Activated CD4-positive, alpha-beta T cell treated with anti-CD3 and anti-CD28 coated beads for 36 hours (primary cell): ENCODE measurements at regions of chr10 and their contacts with region 1.

Region 1: DNA sequence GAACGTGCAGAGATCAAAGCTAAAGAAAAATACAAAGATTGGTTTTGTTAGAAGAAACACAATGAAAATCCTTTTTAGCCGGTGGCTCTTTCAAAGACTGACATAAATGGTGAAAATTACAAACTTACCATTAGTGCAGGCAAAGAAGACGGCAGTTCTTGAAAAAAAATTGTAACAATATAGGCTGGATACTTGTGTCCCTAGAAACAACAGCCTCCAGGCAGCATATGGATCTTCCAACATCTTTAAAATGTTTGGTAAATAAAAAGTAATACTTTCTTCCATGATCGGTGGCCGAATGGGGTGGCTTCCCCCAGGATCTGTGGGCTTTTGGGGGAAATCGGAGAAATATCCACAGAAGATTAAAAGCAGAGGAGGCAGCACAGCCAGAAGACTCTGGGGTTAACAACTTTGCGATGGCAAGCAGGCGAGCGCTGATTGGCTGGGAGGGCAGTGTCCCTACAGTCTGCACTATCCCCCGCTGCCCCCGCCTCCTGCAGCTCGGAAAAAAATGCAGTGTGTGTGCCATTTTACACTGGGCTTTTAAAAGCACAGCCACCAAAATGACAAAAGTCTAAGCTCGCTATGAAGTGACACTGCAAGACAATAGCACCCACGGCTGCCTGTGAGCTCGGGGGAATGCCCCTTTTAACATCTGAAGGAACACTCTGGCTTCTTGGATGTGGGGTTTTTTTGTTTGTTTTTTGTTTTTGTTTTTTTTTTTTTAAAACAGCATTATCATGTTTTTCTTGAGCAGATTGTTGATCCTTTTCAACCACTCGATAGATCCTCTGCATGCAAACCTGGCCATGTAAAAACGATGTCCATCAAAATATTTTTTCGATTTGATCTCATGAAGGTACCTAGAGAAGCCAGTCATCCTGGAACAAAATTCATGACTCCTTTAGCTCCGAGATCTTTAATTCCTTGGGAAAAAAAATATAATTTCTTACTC is 31.7 kb upstream of the EPC1 start:
- DNase-seq: peak; percentile 97
- ATAC-seq: peak; percentile 95
- H3K4me3 Mint-ChIP-seq: no peak overlapping the region
- H3K27ac Mint-ChIP-seq: no peak overlapping the region
- H3K4me1 Mint-ChIP-seq: peaks cover 18% of the 10 kb centered on the region
- H3K27me3 Mint-ChIP-seq: no peaks in the 10 kb centered on the region

Region 2: GRCh38 chr10:30701451-30702173 is 1677.0 kb before region 1 on chr10:
- CTCF ChIA-PET with region 1: no interaction called
- POLR2A ChIA-PET with region 1: no interaction called
- intact Hi-C with region 1: loop called in 1 of 2 experiments (anchors 5 kb)
- DNase-seq: peak; percentile 93
- ATAC-seq: peak; percentile 73
- H3K4me3 Mint-ChIP-seq: peak overlapping the region; percentile 86
- H3K27ac Mint-ChIP-seq: peak overlapping the region; percentile 90
- H3K4me1 Mint-ChIP-seq: peaks cover 87% of the 10 kb centered on the region
- H3K27me3 Mint-ChIP-seq: no peaks in the 10 kb centered on the region

Region 3: GRCh38 chr10:31864834-31865518 is 513.7 kb before region 1 on chr10:
- CTCF ChIA-PET with region 1: no interaction called
- POLR2A ChIA-PET with region 1: no interaction called
- intact Hi-C with region 1: loop called in 1 of 2 experiments (anchors 10 kb)
- DNase-seq: no peak
- ATAC-seq: no peak
- H3K4me3 Mint-ChIP-seq: no peak overlapping the region
- H3K27ac Mint-ChIP-seq: peak overlapping the region; percentile 3
- H3K4me1 Mint-ChIP-seq: peaks cover 30% of the 10 kb centered on the region
- H3K27me3 Mint-ChIP-seq: no peaks in the 10 kb centered on the region

Region 4: GRCh38 chr10:32055813-32056600 is 322.6 kb before region 1 on chr10 and contains the start of gene KIF5B:
- CTCF ChIA-PET with region 1: no interaction called
- POLR2A ChIA-PET with region 1: no interaction called
- intact Hi-C with region 1: loop called (anchors 2 to 10 kb)
- DNase-seq: peak; percentile 92
- ATAC-seq: peak; percentile 92
- H3K4me3 Mint-ChIP-seq: peak within 1 kb of the TSS; percentile 97
- H3K27ac Mint-ChIP-seq: peak within 1 kb of the TSS; percentile 96
- H3K4me1 Mint-ChIP-seq: peaks cover 37% of the 10 kb centered on the region
- H3K27me3 Mint-ChIP-seq: no peaks in the 10 kb centered on the region
- total RNA-seq, gene KIF5B: 57.4 to 59.9 TPM

Region 5: DNA sequence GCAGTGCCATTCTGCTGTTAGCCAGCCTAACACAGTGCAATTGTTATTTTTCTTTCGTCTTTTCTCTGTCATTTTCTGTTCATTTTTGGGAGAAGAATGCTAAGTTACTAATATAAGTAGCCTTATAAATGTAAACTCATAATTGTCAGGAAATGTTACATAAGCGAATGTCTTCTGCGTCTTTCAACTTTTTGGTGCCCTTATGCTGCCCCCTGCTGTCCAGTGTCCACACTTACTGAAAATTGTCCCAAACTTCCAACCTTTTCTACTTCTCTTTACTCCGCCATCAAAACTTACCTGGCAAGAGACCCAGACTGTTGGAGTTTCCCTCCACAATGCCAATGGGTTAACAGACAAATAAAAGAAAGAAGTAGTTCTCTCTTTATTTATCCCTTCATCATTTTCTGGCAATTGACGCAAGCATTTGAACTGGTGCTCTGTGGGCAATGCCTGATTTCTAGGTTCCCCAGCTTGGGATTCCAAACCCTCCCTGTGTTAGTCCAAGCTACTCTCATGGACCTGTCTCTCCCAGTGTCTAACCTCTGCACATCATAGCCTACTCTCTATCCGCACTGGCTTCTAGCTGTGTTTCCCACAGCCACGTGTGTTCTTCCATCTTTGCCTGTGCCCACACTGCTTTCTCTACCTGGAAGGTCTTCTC is 10.7 kb before region 1 on chr10:
- CTCF ChIA-PET with region 1: interaction called, 12 read pairs
- POLR2A ChIA-PET with region 1: no interaction called
- intact Hi-C with region 1: no loop called
- DNase-seq: peak; percentile 86
- ATAC-seq: peak; percentile 20
- H3K4me3 Mint-ChIP-seq: peak overlapping the region; percentile 0
- H3K27ac Mint-ChIP-seq: peak overlapping the region; percentile 5
- H3K4me1 Mint-ChIP-seq: peaks cover 62% of the 10 kb centered on the region
- H3K27me3 Mint-ChIP-seq: no peaks in the 10 kb centered on the region

Region 6: DNA sequence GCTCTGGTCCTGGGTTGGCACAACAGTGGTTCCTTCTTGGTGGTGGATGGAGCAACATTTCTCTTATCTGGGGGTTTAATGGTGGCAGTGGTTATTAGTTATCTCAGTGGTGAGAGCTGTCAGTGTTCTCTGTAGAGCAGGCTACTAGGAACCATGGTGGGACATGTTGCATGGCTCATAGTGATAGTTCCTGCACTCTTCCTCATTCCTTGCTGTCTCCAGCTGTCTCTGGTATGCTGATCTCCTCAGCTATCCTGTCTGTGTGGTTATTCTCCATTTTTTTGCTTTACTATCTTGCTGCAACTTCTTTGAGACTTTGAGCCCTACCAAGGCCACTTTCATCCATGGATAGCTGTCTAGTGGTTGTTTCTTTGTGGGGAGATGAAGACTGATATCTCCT is 111.3 kb after region 1 on chr10:
- CTCF ChIA-PET with region 1: no interaction called
- POLR2A ChIA-PET with region 1: no interaction called
- intact Hi-C with region 1: no loop called
- DNase-seq: no peak
- ATAC-seq: no peak
- H3K4me3 Mint-ChIP-seq: no peak overlapping the region
- H3K27ac Mint-ChIP-seq: no peak overlapping the region
- H3K4me1 Mint-ChIP-seq: peaks cover 4% of the 10 kb centered on the region
- H3K27me3 Mint-ChIP-seq: no peaks in the 10 kb centered on the region

Region 7: DNA sequence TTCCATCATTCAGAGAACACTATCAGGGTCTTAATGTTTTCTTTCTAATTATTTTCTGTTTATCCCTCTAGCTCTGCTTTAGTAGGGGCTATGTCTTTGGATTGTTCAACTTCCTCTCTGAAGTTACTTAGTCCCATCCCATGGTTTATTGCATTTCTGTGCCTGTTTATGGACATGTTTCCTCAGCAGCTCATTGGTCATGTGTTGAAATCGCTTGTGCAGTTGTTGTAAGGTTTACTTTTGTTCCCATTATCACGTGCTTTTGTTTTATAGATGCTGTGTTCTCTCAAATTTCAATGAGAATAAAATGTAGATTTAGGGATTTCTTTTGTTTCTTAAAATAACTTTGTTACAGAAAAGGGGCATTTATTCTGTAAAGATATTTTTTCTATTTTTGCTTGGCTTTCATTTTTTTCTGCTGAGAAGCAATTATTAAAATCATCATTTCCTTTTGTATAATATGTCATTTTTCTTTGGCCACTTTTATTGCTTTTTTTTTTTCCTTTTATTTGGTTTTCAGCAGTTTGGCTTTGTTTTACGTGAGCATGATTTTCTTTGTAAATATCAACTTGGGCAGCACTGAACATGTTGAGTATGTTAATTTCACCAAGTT is 178.2 kb after region 1 on chr10:
- CTCF ChIA-PET with region 1: no interaction called
- POLR2A ChIA-PET with region 1: no interaction called
- intact Hi-C with region 1: no loop called
- DNase-seq: no peak
- ATAC-seq: no peak
- H3K4me3 Mint-ChIP-seq: no peak overlapping the region
- H3K27ac Mint-ChIP-seq: no peak overlapping the region
- H3K4me1 Mint-ChIP-seq: no peaks in the 10 kb centered on the region
- H3K27me3 Mint-ChIP-seq: no peaks in the 10 kb centered on the region

Region 8: GRCh38 chr10:32692174-32692573 is 313.5 kb after region 1 on chr10:
- CTCF ChIA-PET with region 1: no interaction called
- POLR2A ChIA-PET with region 1: no interaction called
- intact Hi-C with region 1: no loop called
- DNase-seq: no peak
- ATAC-seq: no peak
- H3K4me3 Mint-ChIP-seq: no peak overlapping the region
- H3K27ac Mint-ChIP-seq: no peak overlapping the region
- H3K4me1 Mint-ChIP-seq: no peaks in the 10 kb centered on the region
- H3K27me3 Mint-ChIP-seq: no peaks in the 10 kb centered on the region

Region 9: DNA sequence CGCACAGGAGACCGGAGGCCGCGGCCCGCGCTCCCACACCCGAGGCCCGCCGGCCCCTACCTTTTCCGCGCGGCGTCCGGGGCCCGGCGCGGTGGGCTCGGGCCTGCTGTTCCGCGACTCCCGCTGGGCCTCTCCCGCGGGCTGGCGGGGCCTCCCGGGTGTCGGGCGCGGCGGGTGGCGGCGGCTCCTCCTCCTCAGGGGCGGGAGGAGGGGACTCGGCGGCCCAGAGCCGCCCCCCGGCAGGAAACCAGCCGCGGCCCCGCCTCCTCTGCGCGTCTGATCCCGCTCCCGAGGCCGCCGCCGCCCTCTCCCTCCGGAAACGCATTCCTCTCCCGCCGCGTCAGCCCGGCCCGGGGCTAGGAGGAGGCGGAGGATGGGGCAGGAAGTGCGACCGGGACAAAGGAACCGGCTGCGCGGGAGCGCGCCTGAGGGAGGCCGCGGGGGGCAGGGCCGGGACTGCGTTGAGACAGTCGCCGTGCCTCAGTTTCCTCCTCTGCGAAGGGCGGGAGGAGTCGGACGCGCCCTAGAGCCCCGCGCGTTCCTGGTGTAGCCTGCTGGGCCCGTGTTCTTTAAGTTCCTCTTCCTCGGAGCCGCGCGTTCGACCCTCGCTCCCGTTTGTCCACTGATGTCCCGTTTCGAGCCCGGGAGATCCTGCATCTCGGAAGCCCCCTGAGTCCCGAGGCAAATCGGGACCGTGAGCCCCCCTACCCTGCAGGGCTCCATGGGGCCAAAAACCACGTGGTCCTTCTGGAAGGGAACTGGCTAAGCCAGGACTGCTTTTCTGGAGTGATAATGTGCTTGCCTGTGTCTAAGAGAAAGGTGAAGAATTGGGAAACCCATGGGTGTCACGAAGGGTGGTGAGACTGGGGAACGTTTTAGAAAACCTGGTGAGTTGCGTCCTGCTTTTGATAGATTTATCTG is 579.7 kb after region 1 on chr10 and contains the start of gene ITGB1:
- CTCF ChIA-PET with region 1: no interaction called
- POLR2A ChIA-PET with region 1: no interaction called
- intact Hi-C with region 1: loop called (anchors 1 to 10 kb)
- DNase-seq: peak; percentile 92
- ATAC-seq: peak; percentile 83
- H3K4me3 Mint-ChIP-seq: peak within 1 kb of the TSS; percentile 83
- H3K27ac Mint-ChIP-seq: peak within 1 kb of the TSS; percentile 96
- H3K4me1 Mint-ChIP-seq: peaks cover 43% of the 10 kb centered on the region
- H3K27me3 Mint-ChIP-seq: peaks cover 10% of the 10 kb centered on the region
- total RNA-seq, gene ITGB1: 57.6 to 68.9 TPM

Region 10: DNA sequence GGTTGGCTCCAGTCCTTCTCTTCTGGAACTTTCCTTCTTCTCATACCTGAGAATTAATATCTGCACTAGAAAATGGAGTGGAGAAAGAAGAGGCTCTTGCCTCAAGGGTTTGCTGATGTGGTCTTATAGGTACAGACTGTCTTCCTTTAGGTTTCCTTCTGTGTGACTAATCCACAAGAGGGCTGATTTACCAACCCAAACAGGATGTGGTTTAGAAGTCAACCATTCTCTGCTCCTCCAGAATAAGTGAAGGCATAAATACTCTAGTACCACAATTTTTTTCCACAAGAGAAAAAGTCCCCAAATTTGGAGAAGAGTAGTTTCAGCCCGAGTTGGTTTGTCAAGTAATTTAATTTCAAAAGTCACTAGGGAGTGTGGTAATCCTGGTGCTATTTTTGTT is 870.0 kb after region 1 on chr10:
- CTCF ChIA-PET with region 1: no interaction called
- POLR2A ChIA-PET with region 1: no interaction called
- intact Hi-C with region 1: loop called in 1 of 2 experiments (anchors 5 kb)
- DNase-seq: peak; percentile 30
- ATAC-seq: peak; percentile 83
- H3K4me3 Mint-ChIP-seq: no peak overlapping the region
- H3K27ac Mint-ChIP-seq: peak overlapping the region; percentile 39
- H3K4me1 Mint-ChIP-seq: peaks cover 71% of the 10 kb centered on the region
- H3K27me3 Mint-ChIP-seq: peaks cover 12% of the 10 kb centered on the region